A549 (cell line): ENCODE measurements at regions of chr14 and their contacts with region 1.

Region 1: DNA sequence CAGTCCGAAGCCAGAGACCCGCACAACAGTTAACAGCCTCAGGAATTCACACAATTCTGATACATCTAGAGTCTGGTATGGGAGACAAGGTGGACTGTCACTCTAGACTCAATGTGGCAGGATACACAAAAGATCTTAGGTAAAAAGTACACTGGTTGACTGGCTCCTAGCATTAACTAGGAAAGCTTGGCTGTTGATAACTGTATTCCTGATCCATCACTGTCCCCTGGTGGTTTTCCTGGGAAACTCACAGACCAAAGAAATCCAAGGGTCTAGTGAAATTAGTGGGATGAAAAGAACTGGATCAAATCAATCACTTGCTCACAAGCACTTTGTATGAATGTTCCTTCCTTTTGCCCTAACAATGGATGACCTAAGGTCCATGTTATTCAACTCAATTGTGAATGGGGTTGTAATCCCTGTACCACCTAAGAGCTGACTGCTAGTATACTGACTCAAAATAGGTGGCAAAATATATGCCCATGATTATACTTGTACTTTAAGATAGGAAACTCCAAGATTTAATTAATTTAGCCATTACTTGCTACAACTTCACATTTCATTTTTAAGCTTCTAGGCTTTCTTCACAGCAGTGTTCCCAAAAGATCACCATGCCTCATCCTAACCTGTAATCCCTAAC is 14.0 kb downstream of the NPC2 start:
- DNase-seq: peak; percentile 41 to 46
- ATAC-seq: peak; percentile 83 to 87; a peak in 4 of 6 replicates
- H3K4me3 ChIP-seq: no peak overlapping the region
- H3K27ac ChIP-seq: no peak overlapping the region
- H3K4me1 ChIP-seq: no peaks in the 10 kb centered on the region
- CTCF ChIP-seq: peak; percentile 78
- EP300 ChIP-seq: no peak
- POLR2A ChIP-seq: no peak
- RAD21 ChIP-seq: peak; percentile 81 to 95

Region 2: GRCh38 chr14:74324931-74325361 is 154.2 kb before region 1 on chr14:
- CTCF ChIA-PET with region 1: interaction called, 15 read pairs
- POLR2A ChIA-PET with region 1: no interaction called
- DNase-seq: peak; percentile 42 to 65
- ATAC-seq: peak; percentile 51 to 69; a peak in 4 of 6 replicates
- H3K4me3 ChIP-seq: no peak overlapping the region
- H3K27ac ChIP-seq: no peak overlapping the region
- H3K4me1 ChIP-seq: no peaks in the 10 kb centered on the region
- CTCF ChIP-seq: peak; percentile 59
- EP300 ChIP-seq: no peak
- POLR2A ChIP-seq: no peak
- RAD21 ChIP-seq: peak; percentile 55 to 62; a peak in 4 of 5 replicates

Region 3: DNA sequence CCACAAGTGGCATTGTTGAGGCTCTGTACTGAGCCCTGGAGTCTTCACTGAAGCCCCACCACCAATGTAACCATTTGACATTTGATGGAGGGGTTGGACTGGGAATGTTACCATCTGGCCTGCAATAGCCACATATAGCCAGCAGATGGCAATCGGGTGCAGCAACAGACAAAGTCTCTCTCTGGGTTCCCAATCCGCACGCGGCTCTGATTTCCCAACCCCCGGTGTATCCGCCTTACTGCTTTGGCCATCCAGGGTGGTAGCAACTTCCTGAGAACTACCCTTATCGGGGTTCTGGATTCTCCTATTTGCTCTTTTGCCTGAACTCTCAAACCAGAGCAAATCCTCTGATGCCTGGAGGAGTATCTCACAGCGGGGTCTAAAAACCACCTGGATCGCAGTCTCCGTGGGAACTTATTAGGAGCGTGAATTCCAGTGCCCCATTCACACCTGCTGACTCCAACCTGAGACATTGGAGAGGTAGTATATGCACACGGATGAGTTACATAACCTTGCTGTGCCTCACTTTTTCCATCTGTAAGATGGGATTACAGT is 116.7 kb before region 1 on chr14:
- CTCF ChIA-PET with region 1: interaction called, 67 read pairs
- POLR2A ChIA-PET with region 1: no interaction called
- DNase-seq: peak; percentile 68 to 79
- ATAC-seq: peak; percentile 79 to 93
- H3K4me3 ChIP-seq: no peak overlapping the region
- H3K27ac ChIP-seq: peak overlapping the region in 1 of 2 experiments; percentile 50; a peak in 2 of 6 replicates
- H3K4me1 ChIP-seq: no peaks in the 10 kb centered on the region
- CTCF ChIP-seq: peak; percentile 88
- EP300 ChIP-seq: no peak
- POLR2A ChIP-seq: no peak
- RAD21 ChIP-seq: peak; percentile 85 to 88

Region 4: GRCh38 chr14:74459289-74459946 is 19.7 kb before region 1 on chr14:
- CTCF ChIA-PET with region 1: interaction called, 31 read pairs
- POLR2A ChIA-PET with region 1: no interaction called
- DNase-seq: peak; percentile 48 to 51
- ATAC-seq: peak; percentile 96 to 98
- H3K4me3 ChIP-seq: no peak overlapping the region
- H3K27ac ChIP-seq: no peak overlapping the region
- H3K4me1 ChIP-seq: no peaks in the 10 kb centered on the region
- CTCF ChIP-seq: peak; percentile 33; the same call in 2 of the 3 replicates
- EP300 ChIP-seq: no peak
- POLR2A ChIP-seq: no peak
- RAD21 ChIP-seq: peak; percentile 23 to 26; a peak in 1 of 5 replicates

Region 5: GRCh38 chr14:74493343-74494261 is 14.5 kb after region 1 on chr14 and contains the start of gene ISCA2:
- CTCF ChIA-PET with region 1: interaction called, 33 read pairs
- POLR2A ChIA-PET with region 1: interaction called, 4 read pairs
- DNase-seq: peak; percentile 98 to 99
- ATAC-seq: peak; percentile 95 to 97
- H3K4me3 ChIP-seq: peak within 1 kb of the TSS; percentile 82
- H3K27ac ChIP-seq: peak within 1 kb of the TSS; percentile 84 to 96
- H3K4me1 ChIP-seq: peaks cover 35% of the 10 kb centered on the region
- CTCF ChIP-seq: no peak
- EP300 ChIP-seq: no peak
- POLR2A ChIP-seq: peak; percentile 82
- RAD21 ChIP-seq: no peak
- polyA plus RNA-seq, gene ISCA2: 38.8 and 49.3 TPM in 2 replicates

Region 6: DNA sequence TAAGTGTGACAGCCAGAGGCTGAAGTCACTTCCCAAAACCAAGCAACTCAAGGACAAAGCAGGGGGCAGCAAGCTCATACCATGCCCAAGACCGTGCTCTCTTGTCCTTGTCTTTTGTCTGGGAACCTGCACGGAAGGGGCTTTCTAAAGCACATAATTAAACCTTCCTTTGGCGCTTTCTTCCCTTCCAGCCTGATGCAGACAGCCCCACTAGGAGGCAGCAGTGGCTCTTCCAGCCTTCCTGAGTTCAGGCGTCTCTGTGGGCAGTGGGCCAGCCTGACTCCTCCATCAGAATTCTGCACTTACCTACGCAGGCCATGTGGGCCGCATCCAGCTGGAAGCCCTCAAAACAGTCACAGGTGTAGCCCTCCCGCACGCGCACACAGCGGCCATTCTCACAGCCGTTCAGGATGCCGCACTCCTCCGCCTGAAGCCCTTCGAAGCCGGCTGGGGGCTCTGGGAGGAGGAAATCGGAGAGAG is 22.1 kb after region 1 on chr14:
- CTCF ChIA-PET with region 1: interaction called, 10 read pairs
- POLR2A ChIA-PET with region 1: no interaction called
- DNase-seq: peak; percentile 49 to 68
- ATAC-seq: peak; percentile 72 to 85
- H3K4me3 ChIP-seq: no peak overlapping the region
- H3K27ac ChIP-seq: peak overlapping the region in 1 of 2 experiments; percentile 68; a peak in 2 of 6 replicates
- H3K4me1 ChIP-seq: peaks cover 12% of the 10 kb centered on the region; the same call in 2 of the 3 replicates
- CTCF ChIP-seq: peak; percentile 56
- EP300 ChIP-seq: no peak
- POLR2A ChIP-seq: no peak
- RAD21 ChIP-seq: peak; percentile 62 to 77

Region 7: DNA sequence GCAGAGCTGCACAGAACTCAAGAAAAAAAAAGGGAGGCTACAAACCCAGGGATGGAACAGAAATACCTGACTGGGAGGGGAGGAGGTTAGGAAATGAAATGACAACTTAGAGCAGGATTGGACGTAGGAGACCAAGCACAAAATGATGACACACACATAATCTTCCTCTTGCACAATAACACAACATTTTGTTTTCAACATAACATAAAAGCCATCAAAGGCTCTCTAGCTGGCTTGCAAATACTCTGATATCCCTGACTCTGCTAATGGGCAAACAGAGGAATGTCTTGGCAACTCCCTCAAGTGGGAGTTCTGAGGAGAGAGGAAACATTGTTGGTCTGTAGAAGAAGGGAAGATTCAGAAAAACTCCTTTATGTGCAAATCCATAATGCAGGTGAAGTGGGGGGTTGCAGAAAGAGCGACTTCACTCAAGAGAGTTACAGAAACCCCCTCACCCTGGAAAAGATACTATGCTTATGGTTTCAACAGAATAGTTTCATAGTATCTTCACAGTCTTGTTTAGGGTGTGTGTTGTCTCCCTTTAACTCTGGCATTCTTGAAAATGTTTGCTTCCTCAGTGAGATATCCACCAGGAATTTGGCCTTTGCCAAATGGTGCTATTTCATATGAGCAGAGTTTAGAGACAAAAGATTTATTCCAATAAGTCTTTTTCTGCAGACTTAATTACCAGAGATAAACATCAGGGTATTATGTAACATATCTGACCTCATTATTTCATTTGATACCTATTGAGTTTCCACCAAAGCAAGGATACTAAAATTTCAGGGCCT is 176.7 kb after region 1 on chr14:
- CTCF ChIA-PET with region 1: no interaction called
- POLR2A ChIA-PET with region 1: no interaction called
- DNase-seq: peak in 1 of 2 experiments; percentile 63
- ATAC-seq: peak; percentile 51 to 62; a peak in 5 of 6 replicates
- H3K4me3 ChIP-seq: no peak overlapping the region
- H3K27ac ChIP-seq: peak overlapping the region; percentile 56 to 76
- H3K4me1 ChIP-seq: peaks cover 66% of the 10 kb centered on the region
- CTCF ChIP-seq: no peak
- EP300 ChIP-seq: peak in 1 of 2 experiments; percentile 43; a peak in 1 of 5 replicates
- POLR2A ChIP-seq: no peak
- RAD21 ChIP-seq: no peak